ENCODE measurements at regions of chr6 and their contacts with region 1.

Region 1: DNA sequence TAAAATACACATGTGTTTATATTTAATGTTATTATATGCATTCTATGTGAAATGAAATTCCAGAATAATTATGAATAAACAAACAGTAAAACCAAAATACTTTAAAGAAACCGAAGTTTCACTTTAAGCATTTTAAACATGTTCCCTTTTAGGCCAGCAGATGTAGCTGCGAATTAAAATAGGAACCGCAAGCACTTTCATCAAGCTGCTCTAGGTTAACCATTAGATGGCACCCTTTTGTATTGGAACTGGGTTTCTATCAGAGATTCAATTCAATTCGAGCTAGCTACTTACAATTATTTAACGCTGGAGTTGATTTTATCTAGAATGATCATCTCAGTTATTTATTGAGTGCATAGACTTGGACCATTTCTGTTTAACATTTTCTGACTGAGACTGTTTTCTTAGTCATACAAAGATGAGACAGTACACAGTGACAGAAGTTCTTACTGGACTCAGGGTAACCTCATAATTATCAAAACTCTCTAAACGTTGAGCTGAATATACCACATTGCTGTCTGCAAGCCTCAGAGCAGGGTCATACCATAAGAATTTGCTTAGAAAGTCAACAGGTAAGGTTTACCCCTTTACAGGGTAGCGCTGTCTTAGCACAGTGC is 8.5 kb downstream of the TMEM242 start:
- DNase-seq: peak; percentile 79
- H3K4me3 ChIP-seq: no peak overlapping the region
- H3K27ac ChIP-seq: no peak overlapping the region
- H3K4me1 ChIP-seq: peaks cover 20% of the 10 kb centered on the region
- H3K27me3 ChIP-seq: no peaks in the 10 kb centered on the region
- CTCF ChIP-seq: peak; percentile 59 to 68
- POLR2A ChIP-seq: no peak

Region 2: DNA sequence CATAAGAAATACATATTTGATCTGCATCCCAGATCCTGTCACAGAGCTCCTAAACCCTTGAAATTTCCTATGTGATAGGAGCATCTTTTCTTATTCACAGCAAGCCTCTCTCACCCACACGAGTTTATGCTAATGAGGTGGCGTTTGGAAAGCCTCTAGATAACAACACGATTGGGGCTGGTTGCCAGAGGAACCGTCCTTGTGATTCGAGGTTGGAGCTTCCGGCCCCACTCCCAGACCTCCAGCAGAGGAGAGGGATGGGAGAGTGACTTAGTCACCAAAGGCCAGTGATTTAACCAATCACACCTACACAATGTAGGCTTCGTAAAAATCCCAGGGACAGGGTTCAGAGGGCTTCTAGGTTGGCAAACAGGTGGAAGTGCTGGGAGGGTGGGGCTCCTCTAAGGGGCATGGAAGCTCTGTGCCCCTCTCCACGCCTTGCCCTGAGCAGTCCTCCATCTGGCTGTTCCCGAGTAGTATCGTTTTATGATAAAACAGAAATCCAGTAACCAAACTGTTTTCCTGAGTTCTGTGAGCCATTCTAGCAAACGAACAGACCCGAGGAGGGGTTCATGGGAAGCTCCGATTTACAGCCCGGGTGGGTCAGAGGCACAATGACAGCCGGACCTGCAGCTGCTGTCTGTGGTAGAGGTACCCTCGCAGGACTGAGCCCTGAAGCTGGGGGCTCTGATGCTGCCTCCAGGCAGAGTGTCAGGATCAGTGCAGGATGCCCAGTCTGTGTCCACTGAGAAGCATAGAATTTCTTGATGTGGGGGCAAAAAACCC is 775.7 kb before region 1 on chr6:
- CTCF ChIA-PET with region 1: no interaction called
- POLR2A ChIA-PET with region 1: no interaction called
- dilution Hi-C with region 1: no loop called
- intact Hi-C with region 1: no loop called
- DNase-seq: no peak
- H3K4me3 ChIP-seq: no peak overlapping the region
- H3K27ac ChIP-seq: no peak overlapping the region
- H3K4me1 ChIP-seq: no peaks in the 10 kb centered on the region
- H3K27me3 ChIP-seq: no peaks in the 10 kb centered on the region
- CTCF ChIP-seq: no peak
- POLR2A ChIP-seq: no peak

Region 3: GRCh38 chr6:157379656-157380454 is 65.0 kb after region 1 on chr6:
- CTCF ChIA-PET with region 1: interaction called, 10 read pairs
- POLR2A ChIA-PET with region 1: no interaction called
- dilution Hi-C with region 1: no loop called
- intact Hi-C with region 1: loop called (anchors 1 kb)
- DNase-seq: peak; percentile 91
- H3K4me3 ChIP-seq: peak overlapping the region; percentile 61 to 97 (median 74)
- H3K27ac ChIP-seq: peak overlapping the region; percentile 60
- H3K4me1 ChIP-seq: peaks cover 18% of the 10 kb centered on the region
- H3K27me3 ChIP-seq: no peaks in the 10 kb centered on the region
- CTCF ChIP-seq: no peak
- POLR2A ChIP-seq: no peak

Region 4: DNA sequence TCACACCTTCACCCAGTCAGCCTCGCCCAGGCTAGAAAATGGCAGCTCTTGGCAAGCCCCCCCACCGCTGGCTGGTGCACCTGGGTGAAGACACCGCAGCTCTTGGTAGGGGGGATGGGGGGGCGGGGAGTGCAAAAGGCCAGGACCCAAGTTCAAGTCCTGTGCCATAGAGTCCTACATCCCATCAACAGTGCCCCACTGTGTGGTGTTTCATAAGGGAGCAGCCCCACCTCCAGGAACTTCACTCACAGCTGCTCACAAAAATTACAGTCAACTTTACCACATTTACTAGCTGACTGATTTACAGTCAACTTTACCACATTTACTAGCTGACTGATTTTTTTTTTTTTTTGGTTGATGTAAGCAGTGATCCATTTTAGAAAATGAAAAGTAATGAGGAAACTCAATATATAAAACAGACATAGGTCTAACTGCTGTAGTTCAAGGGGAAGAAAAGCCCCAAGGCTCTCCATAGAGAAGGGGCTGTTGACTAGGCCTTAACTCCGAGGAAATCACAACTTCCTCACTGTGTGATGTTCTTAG is 299.3 kb after region 1 on chr6:
- CTCF ChIA-PET with region 1: interaction called, 13 read pairs
- POLR2A ChIA-PET with region 1: no interaction called
- dilution Hi-C with region 1: no loop called
- intact Hi-C with region 1: no loop called
- DNase-seq: no peak
- H3K4me3 ChIP-seq: no peak overlapping the region
- H3K27ac ChIP-seq: no peak overlapping the region
- H3K4me1 ChIP-seq: peaks cover 13% of the 10 kb centered on the region
- H3K27me3 ChIP-seq: no peaks in the 10 kb centered on the region
- CTCF ChIP-seq: no peak
- POLR2A ChIP-seq: no peak

Region 5: DNA sequence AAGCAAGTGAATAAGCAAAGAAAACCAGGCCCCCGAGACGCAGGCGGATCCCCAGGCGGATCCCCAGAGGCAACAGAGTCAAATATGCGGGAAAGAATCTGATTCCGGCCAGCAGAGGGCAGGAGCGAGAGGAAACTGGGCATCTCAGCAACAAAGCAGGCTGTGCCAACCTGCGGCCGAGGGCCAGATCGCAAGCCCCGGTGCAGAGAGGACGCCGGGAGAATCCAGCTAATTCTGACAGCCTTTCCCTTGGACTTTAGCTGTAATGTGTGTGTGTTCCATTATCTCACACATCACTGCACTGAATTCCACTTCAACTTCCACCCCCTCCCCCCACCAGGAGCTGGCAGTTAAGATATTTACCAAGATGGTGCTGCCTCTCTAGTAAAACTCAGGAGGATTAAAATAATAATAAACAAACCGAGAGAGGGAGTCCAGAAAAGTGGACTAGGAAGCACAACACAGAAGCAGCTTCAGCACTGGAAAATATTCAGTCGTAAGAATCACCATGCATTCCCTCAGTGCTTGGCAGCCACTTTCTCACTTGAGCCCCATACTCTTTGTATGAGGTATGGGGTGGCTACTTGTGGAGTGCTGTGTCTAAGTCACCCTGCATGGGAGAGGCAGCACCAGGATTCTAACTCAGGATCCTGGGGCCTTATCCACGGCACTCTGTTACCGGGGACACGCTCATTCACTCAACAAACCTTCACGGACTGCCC is 442.1 kb after region 1 on chr6:
- CTCF ChIA-PET with region 1: interaction called, 11 read pairs
- POLR2A ChIA-PET with region 1: no interaction called
- dilution Hi-C with region 1: no loop called
- intact Hi-C with region 1: loop called (anchors 5 kb)
- DNase-seq: peak; percentile 88
- H3K4me3 ChIP-seq: no peak overlapping the region
- H3K27ac ChIP-seq: peak overlapping the region; percentile 3
- H3K4me1 ChIP-seq: peaks cover 47% of the 10 kb centered on the region
- H3K27me3 ChIP-seq: no peaks in the 10 kb centered on the region
- CTCF ChIP-seq: peak; percentile 80 to 83
- POLR2A ChIP-seq: no peak

Region 6: GRCh38 chr6:157873735-157874344 is 559.0 kb after region 1 on chr6:
- CTCF ChIA-PET with region 1: interaction called, 24 read pairs
- POLR2A ChIA-PET with region 1: no interaction called
- dilution Hi-C with region 1: no loop called
- intact Hi-C with region 1: no loop called
- DNase-seq: peak; percentile 79
- H3K4me3 ChIP-seq: no peak overlapping the region
- H3K27ac ChIP-seq: no peak overlapping the region
- H3K4me1 ChIP-seq: peaks cover 10% of the 10 kb centered on the region
- H3K27me3 ChIP-seq: no peaks in the 10 kb centered on the region
- CTCF ChIP-seq: peak; percentile 79 to 87
- POLR2A ChIP-seq: no peak

Measured in endothelial cell of umbilical vein (primary cell).